Ascending aorta (tissue), 2 donors: ENCODE measurements at regions of chr19 and their contacts with region 1.

Region 1: DNA sequence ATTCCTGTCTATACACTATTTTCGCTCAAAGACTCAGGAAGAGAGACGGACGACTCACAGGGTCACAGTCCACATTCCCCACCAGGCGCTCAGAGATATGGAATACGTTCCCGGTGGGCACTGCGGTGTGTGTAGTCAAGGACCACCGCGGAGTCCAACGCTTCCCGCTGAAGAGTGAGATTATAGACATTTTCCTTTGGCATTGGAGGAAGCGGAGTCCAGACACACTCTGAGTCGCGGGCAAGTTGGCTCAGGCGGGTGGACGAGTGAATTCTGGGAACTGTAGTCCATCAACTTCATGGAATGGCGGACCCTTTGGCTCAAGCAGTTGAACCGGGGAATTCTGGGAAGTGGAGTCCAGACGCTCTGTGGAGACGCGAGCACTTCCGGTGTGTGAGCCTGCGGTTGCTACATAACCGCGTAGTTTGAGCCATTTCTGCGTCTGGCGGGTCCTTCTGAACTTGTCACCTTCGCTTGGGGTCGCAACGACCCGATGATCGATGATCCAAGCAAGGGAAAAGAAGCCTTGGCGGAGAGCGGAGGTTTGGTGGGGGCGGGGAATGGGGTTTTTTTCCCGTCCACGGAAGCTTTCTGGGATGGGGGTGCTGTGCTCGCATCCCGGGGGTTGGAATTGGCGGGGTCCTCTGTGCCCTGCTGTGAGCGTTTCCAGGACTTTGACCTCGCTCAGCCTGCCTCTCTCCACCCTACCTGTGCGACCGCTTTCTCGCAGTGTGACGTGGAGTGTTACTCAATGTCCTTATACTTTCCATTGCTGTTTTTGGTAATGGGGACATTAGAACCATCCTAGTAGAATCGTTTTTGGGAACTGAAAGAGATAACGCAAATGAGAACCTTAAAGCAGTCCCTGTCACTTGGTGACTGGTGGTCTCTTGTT is at the start of gene ZNF230:
- DNase-seq: peak; percentile 76 to 97
- H3K4me3 ChIP-seq: peak within 1 kb of the TSS; percentile 78 to 80
- H3K27ac ChIP-seq: peak within 1 kb of the TSS; percentile 53 to 69
- H3K4me1 ChIP-seq: peaks cover 0 to 9% of the 10 kb centered on the region in 2 donors
- H3K27me3 ChIP-seq: no peaks in the 10 kb centered on the region
- CTCF ChIP-seq: no peak
- total RNA-seq, gene ZNF230: 0.32 TPM

Region 2: DNA sequence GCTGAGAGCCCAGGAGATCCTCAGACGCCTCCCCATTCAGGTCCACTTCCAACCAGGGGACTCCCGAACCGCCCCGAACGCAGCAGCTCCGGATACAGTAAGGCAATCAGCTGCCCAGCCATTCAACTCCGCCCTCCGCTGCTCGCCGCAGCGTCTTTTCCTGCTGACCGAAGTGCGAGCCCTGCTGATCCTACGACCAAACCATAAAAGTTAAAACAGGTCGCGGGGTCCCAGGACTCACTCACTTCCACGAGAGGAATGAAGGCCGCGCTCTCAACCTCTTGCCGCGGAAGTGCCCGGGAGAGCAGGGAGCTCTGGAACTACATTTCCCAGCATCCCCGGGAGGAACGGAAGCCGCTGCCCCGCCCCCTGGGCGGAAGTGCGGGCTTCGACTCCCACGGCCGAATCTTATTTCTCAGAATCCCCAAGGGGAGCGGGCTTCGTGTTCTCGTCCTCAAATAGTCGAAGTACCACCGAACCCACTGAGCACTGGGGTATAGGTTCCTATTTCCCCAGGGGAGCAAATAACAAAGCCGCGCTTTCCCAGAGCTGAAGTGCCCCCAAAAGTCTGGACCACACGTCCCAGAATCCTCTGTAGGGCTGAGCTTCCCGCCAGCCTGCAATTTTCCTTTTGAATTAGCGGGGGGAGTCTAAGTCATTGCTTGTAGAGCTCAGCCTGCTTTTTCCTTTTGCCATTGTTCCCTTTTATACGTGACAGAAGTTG is 67.7 kb before region 1 on chr19 and contains the start of gene ZNF45:
- intact Hi-C with region 1: loop called (anchors 1 kb)
- DNase-seq: peak; percentile 60 to 95
- H3K4me3 ChIP-seq: peak within 1 kb of the TSS; percentile 76 to 93
- H3K27ac ChIP-seq: peak within 1 kb of the TSS; percentile 77 to 82
- H3K4me1 ChIP-seq: peaks cover 4 to 16% of the 10 kb centered on the region in 2 donors
- H3K27me3 ChIP-seq: no peaks in the 10 kb centered on the region
- CTCF ChIP-seq: no peak
- total RNA-seq, gene ZNF45: 6.5 TPM

Region 3: GRCh38 chr19:43983912-43984686 is 18.7 kb before region 1 on chr19 and contains the start of gene ZNF155:
- intact Hi-C with region 1: loop called (anchors 1 kb)
- DNase-seq: peak; percentile 77 to 95
- H3K4me3 ChIP-seq: peak within 1 kb of the TSS; percentile 74
- H3K27ac ChIP-seq: peak within 1 kb of the TSS; percentile 72 to 81
- H3K4me1 ChIP-seq: peaks cover 0 to 4% of the 10 kb centered on the region in 2 donors
- H3K27me3 ChIP-seq: no peaks in the 10 kb centered on the region
- CTCF ChIP-seq: no peak
- total RNA-seq, gene ZNF155: not detected

Region 4: DNA sequence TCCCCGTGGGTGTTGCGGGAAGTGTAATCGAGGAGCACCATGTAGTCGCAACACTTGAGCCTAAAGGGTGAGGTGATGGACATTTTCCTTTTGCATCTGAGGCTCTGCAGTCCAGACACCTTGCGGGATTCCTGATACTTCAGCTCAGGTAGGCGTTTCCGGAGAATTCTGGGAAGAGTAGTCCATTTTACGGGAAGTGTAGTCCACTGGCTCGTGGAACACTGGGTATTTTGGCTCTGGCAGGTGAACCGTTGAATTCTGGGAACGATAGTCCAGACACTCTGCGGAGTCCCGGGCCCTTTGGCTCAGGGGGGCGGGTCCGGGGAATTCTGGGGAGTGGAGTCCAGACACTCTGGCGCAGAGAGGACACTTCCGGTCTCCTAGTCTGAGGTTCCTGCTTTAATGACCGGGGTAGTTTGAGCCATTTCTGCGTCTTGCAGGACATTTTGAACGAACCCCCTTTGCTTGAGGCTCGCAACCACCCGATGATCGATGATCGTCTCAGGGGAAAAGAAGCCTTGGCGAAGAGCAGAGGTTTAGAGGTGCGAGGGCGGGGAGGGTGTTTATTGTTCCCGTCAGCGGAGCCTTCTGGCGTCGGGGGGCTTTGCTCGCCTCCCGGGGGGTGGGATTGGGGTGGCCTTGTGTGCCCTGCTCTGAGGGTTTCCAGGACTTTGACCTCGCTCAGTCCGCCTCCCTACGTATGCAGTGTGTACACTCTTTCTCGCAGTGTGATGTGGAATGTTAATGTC is 49.0 kb after region 1 on chr19 and contains the start of gene ZNF223:
- intact Hi-C with region 1: loop called (anchors 1 kb)
- DNase-seq: peak; percentile 86 to 97
- H3K4me3 ChIP-seq: peak within 1 kb of the TSS; percentile 84 to 86
- H3K27ac ChIP-seq: peak within 1 kb of the TSS; percentile 61 to 71
- H3K4me1 ChIP-seq: peaks cover 4 to 7% of the 10 kb centered on the region in 2 donors
- H3K27me3 ChIP-seq: no peaks in the 10 kb centered on the region
- CTCF ChIP-seq: no peak
- total RNA-seq, gene ZNF223: not detected

Region 5: DNA sequence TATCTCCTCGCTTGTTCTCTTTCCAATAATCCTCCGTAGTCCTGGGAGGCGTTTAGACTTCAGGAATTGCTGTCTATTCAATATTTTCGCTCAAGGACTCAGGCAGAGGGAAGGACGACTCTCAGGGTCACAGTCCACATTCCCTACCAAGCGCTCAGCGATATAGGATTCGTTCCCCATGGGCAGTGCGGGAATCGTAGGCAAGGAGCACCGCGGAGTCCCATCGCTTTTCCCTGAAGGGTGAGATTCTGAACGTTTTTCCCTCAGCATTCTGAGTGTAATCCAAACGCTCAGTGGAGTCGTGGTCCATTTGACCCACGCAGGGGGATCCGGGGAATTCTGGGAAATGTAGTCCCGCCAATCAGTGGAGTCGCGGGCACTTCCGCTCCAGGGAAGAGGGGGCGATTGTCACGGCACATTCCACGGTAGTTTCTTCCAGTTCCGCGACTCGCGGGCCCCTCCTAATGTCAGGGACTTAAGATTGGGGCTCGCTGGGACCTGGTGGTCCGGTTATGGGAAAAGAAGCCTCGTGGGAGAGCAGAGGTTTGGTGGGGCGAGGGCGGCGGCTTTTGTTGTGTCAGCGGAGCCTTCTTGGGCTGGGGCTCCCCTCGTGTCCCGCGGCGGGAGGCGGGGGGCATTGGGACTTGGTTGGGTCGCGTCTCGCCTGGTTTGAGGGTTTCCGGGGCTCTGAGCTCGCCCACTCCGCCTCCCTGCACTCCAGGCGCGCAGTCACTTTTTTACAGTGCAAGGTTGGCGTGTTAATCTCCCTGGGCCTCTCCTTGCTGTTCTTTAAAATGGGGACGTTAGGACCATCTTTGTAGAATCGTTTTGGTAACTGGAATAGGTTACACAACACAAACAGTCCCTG is 138.6 kb after region 1 on chr19 and contains the start of gene ZNF234:
- intact Hi-C with region 1: loop called (anchors 1 kb)
- DNase-seq: peak; percentile 35 to 88
- H3K4me3 ChIP-seq: peak within 1 kb of the TSS; percentile 69 to 96
- H3K27ac ChIP-seq: peak within 1 kb of the TSS; percentile 59 to 80
- H3K4me1 ChIP-seq: peaks cover 0 to 10% of the 10 kb centered on the region in 2 donors
- H3K27me3 ChIP-seq: no peaks in the 10 kb centered on the region
- CTCF ChIP-seq: no peak
- total RNA-seq, gene ZNF234: 7.9 TPM

Region 6: GRCh38 chr19:44228318-44228717 is 225.5 kb after region 1 on chr19:
- intact Hi-C with region 1: no loop called
- DNase-seq: no peak
- H3K4me3 ChIP-seq: no peak overlapping the region
- H3K27ac ChIP-seq: no peak overlapping the region
- H3K4me1 ChIP-seq: no peaks in the 10 kb centered on the region
- H3K27me3 ChIP-seq: no peaks in the 10 kb centered on the region
- CTCF ChIP-seq: no peak